Activated CD4-positive, alpha-beta memory T cell treated with anti-CD3 and anti-CD28 coated beads for 36 hours (primary cell): ENCODE measurements at regions of chr15 and their contacts with region 1.

Region 1: DNA sequence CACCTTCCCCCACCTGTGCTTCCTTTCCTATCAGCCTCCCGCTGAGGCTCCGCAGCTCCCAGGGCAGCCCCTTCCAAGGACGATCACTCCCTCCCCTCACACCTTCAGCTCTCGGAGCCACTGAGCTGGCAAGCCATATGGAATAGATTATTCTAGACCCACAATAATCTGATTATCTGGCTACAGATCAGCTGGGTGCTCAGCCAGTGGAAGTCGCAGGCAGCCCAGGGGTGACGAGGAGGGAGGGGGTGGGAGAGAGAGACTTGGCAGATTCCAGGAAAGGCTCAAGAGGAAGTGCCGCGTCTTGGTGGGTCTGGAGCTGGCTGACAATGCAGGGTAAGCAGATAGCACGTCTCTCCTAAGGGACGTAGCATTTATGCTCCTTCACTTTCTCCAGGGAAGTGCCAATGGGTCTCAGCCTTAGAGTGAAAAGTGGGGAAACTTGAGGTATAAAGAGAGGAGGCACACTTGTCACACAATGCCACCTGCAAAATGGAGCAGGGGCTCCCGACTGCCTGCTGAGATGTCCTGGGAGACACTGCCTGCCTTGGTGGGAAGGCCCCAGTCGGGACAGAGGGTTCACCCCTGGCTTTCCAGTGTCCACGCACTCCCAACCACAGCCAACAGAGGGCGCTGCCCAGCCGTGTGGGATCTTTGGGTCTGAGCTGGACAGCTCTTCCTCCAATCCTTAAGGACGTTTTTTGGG is 9.4 kb upstream of the MESP1 start:
- DNase-seq: peak; percentile 86
- H3K4me3 Mint-ChIP-seq: no peak overlapping the region
- H3K27ac Mint-ChIP-seq: no peak overlapping the region
- H3K4me1 Mint-ChIP-seq: no peaks in the 10 kb centered on the region
- H3K27me3 Mint-ChIP-seq: peaks cover 5% of the 10 kb centered on the region

Region 2: DNA sequence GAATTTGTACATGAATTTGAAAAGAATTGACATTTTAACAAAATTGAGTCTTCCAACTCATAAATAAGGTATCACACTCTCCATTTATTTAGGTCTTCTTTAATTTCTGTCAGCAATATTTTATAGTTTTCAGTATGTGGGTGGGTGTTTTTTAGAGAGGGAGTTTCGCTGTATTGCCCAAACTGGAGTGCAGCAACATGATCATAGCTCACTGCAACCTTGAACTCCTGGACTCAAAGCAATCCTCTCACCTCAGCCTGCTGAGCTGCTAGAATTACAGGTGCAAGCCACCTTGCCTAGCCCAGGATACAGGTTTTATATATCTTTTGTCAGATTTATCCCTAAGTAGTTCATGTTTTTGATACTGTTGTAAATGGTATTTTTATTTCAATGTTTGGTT is 65.3 kb before region 1 on chr15:
- CTCF ChIA-PET with region 1: no interaction called
- POLR2A ChIA-PET with region 1: no interaction called
- intact Hi-C with region 1: no loop called
- DNase-seq: no peak
- H3K4me3 Mint-ChIP-seq: no peak overlapping the region
- H3K27ac Mint-ChIP-seq: no peak overlapping the region
- H3K4me1 Mint-ChIP-seq: peaks cover under 1% of the 10 kb centered on the region
- H3K27me3 Mint-ChIP-seq: peaks cover 4% of the 10 kb centered on the region

Region 3: GRCh38 chr15:89740137-89740536 is 20.3 kb before region 1 on chr15:
- CTCF ChIA-PET with region 1: interaction called, 19 read pairs
- POLR2A ChIA-PET with region 1: no interaction called
- intact Hi-C with region 1: no loop called
- DNase-seq: peak; percentile 61
- H3K4me3 Mint-ChIP-seq: no peak overlapping the region
- H3K27ac Mint-ChIP-seq: no peak overlapping the region
- H3K4me1 Mint-ChIP-seq: peaks cover 2% of the 10 kb centered on the region
- H3K27me3 Mint-ChIP-seq: peaks cover 2% of the 10 kb centered on the region

Region 4: GRCh38 chr15:89772932-89773583 is 12.6 kb after region 1 on chr15:
- CTCF ChIA-PET with region 1: interaction called, 15 read pairs
- POLR2A ChIA-PET with region 1: no interaction called
- intact Hi-C with region 1: no loop called
- DNase-seq: no peak
- H3K4me3 Mint-ChIP-seq: no peak overlapping the region
- H3K27ac Mint-ChIP-seq: no peak overlapping the region
- H3K4me1 Mint-ChIP-seq: no peaks in the 10 kb centered on the region
- H3K27me3 Mint-ChIP-seq: peaks cover 15% of the 10 kb centered on the region

Region 5: GRCh38 chr15:89781891-89782618 is 21.6 kb after region 1 on chr15:
- CTCF ChIA-PET with region 1: interaction called, 12 read pairs
- POLR2A ChIA-PET with region 1: interaction called, 4 read pairs
- intact Hi-C with region 1: no loop called
- DNase-seq: peak; percentile 54
- H3K4me3 Mint-ChIP-seq: no peak overlapping the region
- H3K27ac Mint-ChIP-seq: no peak overlapping the region
- H3K4me1 Mint-ChIP-seq: peaks cover 21% of the 10 kb centered on the region
- H3K27me3 Mint-ChIP-seq: peaks cover 11% of the 10 kb centered on the region

Region 6: GRCh38 chr15:89888214-89888804 is 127.9 kb after region 1 on chr15:
- CTCF ChIA-PET with region 1: interaction called, 45 read pairs
- POLR2A ChIA-PET with region 1: no interaction called
- intact Hi-C with region 1: no loop called
- DNase-seq: no peak
- H3K4me3 Mint-ChIP-seq: no peak overlapping the region
- H3K27ac Mint-ChIP-seq: no peak overlapping the region
- H3K4me1 Mint-ChIP-seq: peaks cover 36% of the 10 kb centered on the region
- H3K27me3 Mint-ChIP-seq: no peaks in the 10 kb centered on the region

Region 7: GRCh38 chr15:90071208-90071807 is 310.9 kb after region 1 on chr15:
- CTCF ChIA-PET with region 1: interaction called, 11 read pairs
- POLR2A ChIA-PET with region 1: no interaction called
- intact Hi-C with region 1: loop called (anchors 5 kb)
- DNase-seq: peak; percentile 84
- H3K4me3 Mint-ChIP-seq: no peak overlapping the region
- H3K27ac Mint-ChIP-seq: no peak overlapping the region
- H3K4me1 Mint-ChIP-seq: peaks cover 21% of the 10 kb centered on the region
- H3K27me3 Mint-ChIP-seq: no peaks in the 10 kb centered on the region

Region 8: GRCh38 chr15:90086868-90087268 is 326.4 kb after region 1 on chr15:
- CTCF ChIA-PET with region 1: interaction called, 31 read pairs
- POLR2A ChIA-PET with region 1: no interaction called
- intact Hi-C with region 1: no loop called
- DNase-seq: peak; percentile 73
- H3K4me3 Mint-ChIP-seq: no peak overlapping the region
- H3K27ac Mint-ChIP-seq: peak overlapping the region; percentile 49
- H3K4me1 Mint-ChIP-seq: peaks cover 4% of the 10 kb centered on the region
- H3K27me3 Mint-ChIP-seq: no peaks in the 10 kb centered on the region

Region 9: GRCh38 chr15:90113166-90113565 is 352.7 kb after region 1 on chr15:
- CTCF ChIA-PET with region 1: no interaction called
- POLR2A ChIA-PET with region 1: no interaction called
- intact Hi-C with region 1: no loop called
- DNase-seq: no peak
- H3K4me3 Mint-ChIP-seq: no peak overlapping the region
- H3K27ac Mint-ChIP-seq: no peak overlapping the region
- H3K4me1 Mint-ChIP-seq: no peaks in the 10 kb centered on the region
- H3K27me3 Mint-ChIP-seq: no peaks in the 10 kb centered on the region